Transverse colon (tissue), 4 donors: ENCODE measurements at regions of chr12 and their contacts with region 1.

Region 1: GRCh38 chr12:8860165-8860961 is 37.9 kb downstream of the A2ML1 start:
- DNase-seq: peak; percentile 31
- H3K4me3 ChIP-seq: no peak overlapping the region
- H3K27ac ChIP-seq: no peak overlapping the region
- H3K4me1 ChIP-seq: no peaks in the 10 kb centered on the region
- H3K27me3 ChIP-seq: no peaks in the 10 kb centered on the region
- CTCF ChIP-seq: peak; percentile 38 to 54 (median 48)
- EP300 ChIP-seq: no peak
- POLR2A ChIP-seq: no peak

Region 2: GRCh38 chr12:8544295-8544694 is 316.1 kb before region 1 on chr12:
- in situ Hi-C with region 1: loop called in 1 of 4 experiments (anchors 25 kb)
- intact Hi-C with region 1: no loop called
- DNase-seq: peak; percentile 52
- H3K4me3 ChIP-seq: no peak overlapping the region
- H3K27ac ChIP-seq: no peak overlapping the region
- H3K4me1 ChIP-seq: peaks cover 0 to 4% (median 0%) of the 10 kb centered on the region in 4 donors
- H3K27me3 ChIP-seq: no peaks in the 10 kb centered on the region
- CTCF ChIP-seq: peak; percentile 63 to 93 (median 88)
- EP300 ChIP-seq: no peak
- POLR2A ChIP-seq: no peak

Region 3: GRCh38 chr12:8813572-8814357 is 46.6 kb before region 1 on chr12:
- in situ Hi-C with region 1: no loop called
- intact Hi-C with region 1: no loop called
- DNase-seq: no peak
- H3K4me3 ChIP-seq: no peak overlapping the region
- H3K27ac ChIP-seq: no peak overlapping the region
- H3K4me1 ChIP-seq: no peaks in the 10 kb centered on the region
- H3K27me3 ChIP-seq: no peaks in the 10 kb centered on the region
- CTCF ChIP-seq: no peak
- EP300 ChIP-seq: no peak
- POLR2A ChIP-seq: no peak

Region 4: DNA sequence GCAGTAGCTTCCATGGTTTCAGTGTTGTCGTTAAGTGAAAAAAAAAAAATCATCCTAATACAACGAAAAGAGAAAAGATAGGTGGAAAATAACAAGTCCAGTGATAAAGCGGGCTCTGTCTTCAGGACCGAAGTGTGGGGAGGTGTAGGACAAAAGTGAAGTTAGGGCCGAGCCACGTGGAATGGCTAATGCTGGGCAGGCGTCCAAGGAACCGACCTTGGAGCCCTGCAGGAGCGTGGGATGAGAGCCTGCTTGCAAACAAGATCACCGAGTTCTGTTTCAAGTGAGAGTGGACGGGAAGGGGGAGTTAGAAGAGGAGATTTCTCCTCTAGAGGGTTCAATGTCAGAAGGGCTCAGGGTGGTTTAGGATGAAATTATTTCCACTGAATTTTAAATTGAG is 15.7 kb before region 1 on chr12:
- in situ Hi-C with region 1: no loop called
- intact Hi-C with region 1: no loop called
- DNase-seq: no peak
- H3K4me3 ChIP-seq: no peak overlapping the region
- H3K27ac ChIP-seq: no peak overlapping the region
- H3K4me1 ChIP-seq: no peaks in the 10 kb centered on the region
- H3K27me3 ChIP-seq: no peaks in the 10 kb centered on the region
- CTCF ChIP-seq: no peak
- EP300 ChIP-seq: no peak
- POLR2A ChIP-seq: no peak

Region 5: DNA sequence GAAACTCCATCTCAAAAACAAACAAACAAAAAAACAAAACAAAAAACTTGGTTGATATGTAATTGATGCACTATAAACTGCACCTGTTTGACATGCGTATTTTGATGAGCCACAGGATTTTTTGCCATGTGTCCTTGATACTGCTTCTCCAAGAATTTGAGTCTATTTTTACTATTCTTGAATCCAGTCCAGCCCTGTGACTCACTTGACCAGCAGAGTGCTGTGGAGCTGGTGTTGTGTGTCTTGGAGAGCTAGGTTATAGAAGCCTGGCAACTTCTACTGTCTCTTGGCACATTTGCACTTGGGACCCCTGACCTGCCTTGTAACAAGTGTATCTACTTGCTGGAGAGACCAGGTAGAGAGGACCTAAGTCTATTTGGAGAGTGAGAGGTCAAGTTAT is 181.0 kb after region 1 on chr12:
- in situ Hi-C with region 1: no loop called
- intact Hi-C with region 1: no loop called
- DNase-seq: no peak
- H3K4me3 ChIP-seq: no peak overlapping the region
- H3K27ac ChIP-seq: no peak overlapping the region
- H3K4me1 ChIP-seq: no peaks in the 10 kb centered on the region
- H3K27me3 ChIP-seq: no peaks in the 10 kb centered on the region
- CTCF ChIP-seq: no peak
- EP300 ChIP-seq: no peak
- POLR2A ChIP-seq: no peak